ENCODE measurements at regions of chr5 and their contacts with region 1.

Region 1: GRCh38 chr5:114361724-114362196 is at the start of gene KCNN2:
- DNase-seq: peak; percentile 92
- ATAC-seq: peak; percentile 87
- H3K4me3 ChIP-seq: peak within 1 kb of the TSS; percentile 76
- H3K27ac ChIP-seq: no peak within 1 kb of the TSS
- H3K4me1 ChIP-seq: no peaks in the 10 kb centered on the region
- H3K27me3 ChIP-seq: peaks cover 7% of the 10 kb centered on the region
- CTCF ChIP-seq: no peak
- POLR2A ChIP-seq: 0 out of 2 replicates have a peak, but pooled peaks have one; percentile 22
- RAD21 ChIP-seq: no peak
- total RNA-seq, gene KCNN2: 2.2 and 3.3 TPM in 2 replicates

Region 2: GRCh38 chr5:113678924-113679575 is 682.7 kb before region 1 on chr5:
- CTCF ChIA-PET with region 1: no interaction called
- POLR2A ChIA-PET with region 1: no interaction called
- dilution Hi-C with region 1: no loop called
- in situ Hi-C with region 1: no loop called
- intact Hi-C with region 1: loop called (anchors 2 kb)
- DNase-seq: peak; percentile 36
- ATAC-seq: peak; percentile 84
- H3K4me3 ChIP-seq: no peak overlapping the region
- H3K27ac ChIP-seq: no peak overlapping the region
- H3K4me1 ChIP-seq: no peaks in the 10 kb centered on the region
- H3K27me3 ChIP-seq: no peaks in the 10 kb centered on the region; the same call in 1 of the 2 replicates
- CTCF ChIP-seq: peak; percentile 84
- POLR2A ChIP-seq: no peak
- RAD21 ChIP-seq: peak; percentile 85

Region 3: DNA sequence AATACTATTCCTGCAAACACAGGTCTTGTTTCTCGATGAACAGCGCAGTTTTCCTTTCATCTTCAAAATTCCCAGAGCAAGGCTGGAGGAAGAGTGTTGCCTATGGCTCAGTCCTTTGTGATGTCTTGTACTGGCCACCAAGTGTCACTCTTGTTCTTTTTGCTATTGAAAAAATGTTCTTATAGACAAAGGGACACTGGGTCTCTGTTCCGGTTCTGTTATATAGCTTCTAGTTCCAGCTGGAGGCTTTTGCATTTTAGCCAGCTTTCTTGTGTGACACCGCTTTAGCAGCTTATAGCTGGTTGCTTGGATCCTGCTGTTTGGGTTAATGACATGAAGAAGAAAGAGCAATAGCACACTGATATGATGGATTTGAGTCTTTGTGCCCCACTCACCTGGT is 343.6 kb before region 1 on chr5:
- CTCF ChIA-PET with region 1: no interaction called
- POLR2A ChIA-PET with region 1: no interaction called
- dilution Hi-C with region 1: no loop called
- in situ Hi-C with region 1: no loop called
- intact Hi-C with region 1: loop called (anchors 2 kb)
- DNase-seq: peak; percentile 1
- ATAC-seq: peak; percentile 35; the same call in 1 of the 2 replicates
- H3K4me3 ChIP-seq: no peak overlapping the region
- H3K27ac ChIP-seq: no peak overlapping the region
- H3K4me1 ChIP-seq: no peaks in the 10 kb centered on the region
- H3K27me3 ChIP-seq: no peaks in the 10 kb centered on the region; the same call in 1 of the 2 replicates
- CTCF ChIP-seq: peak; percentile 22; the same call in 1 of the 2 replicates
- POLR2A ChIP-seq: no peak
- RAD21 ChIP-seq: peak; percentile 44

Region 4: DNA sequence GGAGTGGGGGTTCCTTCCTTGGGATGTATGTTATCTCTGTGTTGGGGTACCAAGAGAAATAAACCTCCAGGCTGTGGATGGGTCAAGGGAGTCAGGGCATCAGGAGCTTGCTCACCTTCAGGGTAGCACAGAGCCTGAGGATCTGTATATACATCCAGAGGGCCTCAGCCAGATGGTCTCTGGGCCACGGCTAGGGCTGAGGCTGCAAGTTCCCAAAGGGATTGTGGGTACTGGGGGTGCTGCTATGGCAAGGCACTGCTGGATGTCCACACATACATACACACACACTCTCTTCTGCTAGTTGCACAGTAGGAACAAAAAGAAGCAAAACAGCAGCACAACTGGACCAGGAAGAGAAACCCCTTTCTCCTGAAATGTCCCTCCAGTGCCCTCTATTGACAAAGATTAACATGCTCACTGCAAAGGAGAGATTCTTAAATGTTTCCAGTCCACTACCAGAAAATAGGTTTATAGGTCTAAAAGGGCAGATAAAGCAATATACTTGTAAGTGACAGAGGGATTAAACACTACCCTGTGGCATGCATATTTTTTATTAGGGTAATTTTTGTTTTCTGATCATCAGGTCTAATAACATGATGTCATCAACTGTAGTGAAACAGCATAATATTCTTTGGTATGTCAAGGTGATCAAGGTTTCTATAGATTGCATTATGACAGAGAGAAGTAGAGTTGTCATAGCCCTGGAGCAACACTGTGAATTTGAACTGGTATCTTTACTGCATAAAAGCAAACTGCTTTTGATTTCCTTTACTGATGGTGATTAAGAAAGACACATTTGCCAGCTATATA is 56.2 kb before region 1 on chr5:
- CTCF ChIA-PET with region 1: no interaction called
- POLR2A ChIA-PET with region 1: no interaction called
- dilution Hi-C with region 1: no loop called
- in situ Hi-C with region 1: no loop called
- intact Hi-C with region 1: loop called (anchors 5 kb)
- DNase-seq: peak; percentile 74
- ATAC-seq: peak; percentile 90
- H3K4me3 ChIP-seq: no peak overlapping the region
- H3K27ac ChIP-seq: peak overlapping the region; percentile 81
- H3K4me1 ChIP-seq: peaks cover 10% of the 10 kb centered on the region
- H3K27me3 ChIP-seq: no peaks in the 10 kb centered on the region
- CTCF ChIP-seq: peak; percentile 85
- POLR2A ChIP-seq: no peak
- RAD21 ChIP-seq: peak; percentile 84

Measured in IMR-90 (cell line).